ENCODE measurements at regions of chr21 and their contacts with region 1.

Region 1: GRCh38 chr21:36125512-36126222 is 9.2 kb upstream of the CBR3 start:
- DNase-seq: peak; percentile 21 to 70 (median 35)
- H3K4me3 ChIP-seq: no peak overlapping the region
- H3K4me3 Mint-ChIP-seq: peak overlapping the region in 1 of 7 donors; percentile 46
- H3K27ac ChIP-seq: no peak overlapping the region
- H3K27ac Mint-ChIP-seq: peak overlapping the region in 2 of 8 donors; percentile 24 to 72
- H3K4me1 ChIP-seq: peaks cover 6% of the 10 kb centered on the region
- H3K4me1 Mint-ChIP-seq: peaks cover 11 to 23% (median 16%) of the 10 kb centered on the region in 3 donors
- H3K27me3 ChIP-seq: no peaks in the 10 kb centered on the region
- H3K27me3 Mint-ChIP-seq: peaks cover 2 to 3% of the 10 kb centered on the region in 2 donors

Region 2: DNA sequence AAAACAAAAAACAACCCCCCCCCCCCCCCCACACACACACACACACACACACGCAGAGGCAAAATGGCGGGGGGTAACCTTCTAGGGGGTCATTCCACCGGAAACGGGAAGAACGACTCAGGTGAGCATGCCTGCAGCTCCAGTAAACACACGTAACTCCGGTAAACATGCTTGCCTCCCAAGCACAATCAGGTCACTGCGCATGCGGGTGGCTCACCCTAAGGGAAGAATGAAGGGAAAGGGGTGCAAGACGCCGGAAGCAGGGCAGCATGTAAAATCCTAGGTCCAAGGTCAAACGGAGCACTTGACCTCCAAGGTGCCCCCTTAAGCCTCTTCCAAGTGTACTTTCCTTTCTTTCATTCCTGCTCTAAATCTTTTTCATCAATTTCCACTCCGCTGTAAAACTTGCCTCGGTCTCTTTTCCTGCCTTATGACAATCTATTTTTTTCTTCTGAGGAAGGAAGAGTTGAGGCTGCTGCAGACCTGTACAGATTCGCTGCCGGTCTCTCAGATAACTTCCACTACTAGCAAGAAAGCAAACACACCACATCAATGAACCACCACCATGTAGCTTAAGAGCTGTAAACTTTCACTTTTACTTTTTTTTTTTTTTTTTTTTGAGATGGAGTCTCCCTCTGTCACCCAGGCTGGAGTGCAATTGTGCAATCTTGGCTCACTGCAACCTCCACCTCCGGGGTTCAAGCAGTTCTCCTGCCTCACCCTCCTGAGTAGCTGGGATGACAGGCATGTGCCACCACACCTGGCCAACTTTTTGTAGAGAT is 11.8 kb before region 1 on chr21:
- CTCF ChIA-PET with region 1: interaction called, 13 read pairs
- POLR2A ChIA-PET with region 1: no interaction called
- DNase-seq: peak in 4 of 5 donors; percentile 15 to 85 (median 61)
- H3K4me3 ChIP-seq: peak overlapping the region; percentile 65
- H3K4me3 Mint-ChIP-seq: peak overlapping the region; percentile 42 to 97 (median 89)
- H3K27ac ChIP-seq: no peak overlapping the region
- H3K27ac Mint-ChIP-seq: peak overlapping the region; percentile 4 to 94 (median 80)
- H3K4me1 ChIP-seq: peaks cover 26% of the 10 kb centered on the region
- H3K4me1 Mint-ChIP-seq: peaks cover 8 to 32% (median 18%) of the 10 kb centered on the region in 3 donors
- H3K27me3 ChIP-seq: no peaks in the 10 kb centered on the region
- H3K27me3 Mint-ChIP-seq: peaks cover 11 to 28% of the 10 kb centered on the region in 2 donors